ENCODE measurements at regions of chr15 and their contacts with region 1.

Region 1: DNA sequence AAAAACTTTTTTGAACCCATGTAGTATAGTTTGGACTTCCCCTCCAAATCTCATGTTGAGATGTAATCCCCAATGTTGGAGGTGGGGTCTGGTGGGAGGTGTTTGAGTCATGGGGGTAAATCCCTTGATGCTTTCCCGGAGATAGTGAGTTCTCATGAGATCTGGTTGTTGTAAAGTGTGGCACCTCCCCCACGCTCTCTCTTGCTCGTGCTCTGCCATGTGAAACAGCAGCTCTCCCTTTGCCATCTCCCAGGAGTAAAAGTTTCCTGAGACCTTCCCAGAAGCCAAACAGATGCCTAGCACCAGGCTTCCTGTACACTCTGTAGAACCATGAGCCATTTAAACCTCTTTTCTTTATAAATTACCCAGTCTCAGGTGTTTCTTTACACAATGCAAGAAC is 16.0 kb upstream of the RNU6-1 start:
- DNase-seq: no peak

Region 2: GRCh38 chr15:68204776-68205557 is 349.1 kb after region 1 on chr15 and contains the start of gene CALML4:
- intact Hi-C with region 1: loop called in 1 of 2 experiments (anchors 5 kb)
- DNase-seq: peak; percentile 93
- total RNA-seq, gene CALML4: 5.7 to 8.4 TPM